CD4-positive, alpha-beta memory T cell (primary cell): ENCODE measurements at regions of chr12 and their contacts with region 1.

Region 1: GRCh38 chr12:47742253-47742825 is 16.3 kb downstream of the RAPGEF3 start:
- DNase-seq: peak; percentile 58 to 67 (median 61)
- H3K4me3 ChIP-seq: no peak overlapping the region
- H3K4me3 Mint-ChIP-seq: peak overlapping the region in 2 of 8 donors; percentile 24 to 59
- H3K27ac ChIP-seq: no peak overlapping the region
- H3K27ac Mint-ChIP-seq: peak overlapping the region in 6 of 7 donors; percentile 20 to 72 (median 36)
- H3K4me1 ChIP-seq: peaks cover 29% of the 10 kb centered on the region
- H3K4me1 Mint-ChIP-seq: peaks cover 19 to 55% (median 40%) of the 10 kb centered on the region in 4 donors
- H3K27me3 ChIP-seq: no peaks in the 10 kb centered on the region
- H3K27me3 Mint-ChIP-seq: peaks cover 0 to 3% of the 10 kb centered on the region in 2 donors

Region 2: DNA sequence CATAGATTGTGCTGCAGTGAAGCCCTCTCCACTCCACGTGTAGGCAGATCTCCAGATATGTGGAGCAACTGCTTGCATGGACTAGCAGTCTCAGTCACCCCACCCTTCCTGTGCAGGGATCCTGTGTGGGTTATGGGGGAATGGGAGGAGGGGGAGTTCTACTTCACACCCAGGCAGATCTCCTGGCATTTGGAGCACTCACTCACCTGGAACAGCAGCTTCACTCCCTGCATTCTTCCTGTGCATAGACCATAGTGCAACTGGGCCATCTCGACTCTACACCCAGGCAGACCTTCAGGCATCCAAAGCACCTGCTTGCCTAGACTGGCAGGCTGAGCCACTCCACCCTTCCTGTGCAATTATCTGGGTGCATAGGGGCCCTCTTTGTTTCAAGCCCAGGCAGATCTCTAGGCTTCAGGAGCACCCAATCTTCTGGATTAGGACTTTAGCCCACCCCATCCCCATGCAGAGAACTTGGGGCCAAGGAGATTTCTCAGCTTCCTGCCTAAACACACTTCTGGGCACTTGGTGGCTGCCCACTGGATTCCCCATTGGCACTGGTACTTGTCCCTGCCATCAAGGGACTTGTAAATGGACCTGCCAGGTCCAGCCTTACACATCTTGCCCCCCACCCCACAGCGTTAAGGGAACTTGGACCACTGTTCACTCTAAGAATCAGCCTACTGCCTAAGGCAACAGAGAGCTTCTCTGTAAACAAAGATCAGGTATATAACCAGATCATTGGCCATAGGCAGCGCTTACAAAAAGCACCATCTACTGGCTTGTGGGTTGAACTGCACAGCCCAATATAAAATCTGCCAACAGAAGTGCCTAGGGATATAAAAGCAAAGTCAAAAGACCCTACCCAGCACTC is 758.7 kb before region 1 on chr12:
- CTCF ChIA-PET with region 1: no interaction called
- POLR2A ChIA-PET with region 1: no interaction called
- intact Hi-C with region 1: no loop called
- DNase-seq: peak; percentile 21 to 37 (median 26)
- H3K4me3 ChIP-seq: no peak overlapping the region
- H3K4me3 Mint-ChIP-seq: peak overlapping the region in 1 of 8 donors; percentile 20
- H3K27ac ChIP-seq: no peak overlapping the region
- H3K27ac Mint-ChIP-seq: no peak overlapping the region
- H3K4me1 ChIP-seq: peaks cover 9% of the 10 kb centered on the region
- H3K4me1 Mint-ChIP-seq: peaks cover 0 to 7% (median 3%) of the 10 kb centered on the region in 4 donors
- H3K27me3 ChIP-seq: peaks cover 4% of the 10 kb centered on the region
- H3K27me3 Mint-ChIP-seq: peaks cover 26 to 34% of the 10 kb centered on the region in 2 donors

Region 3: GRCh38 chr12:47121146-47121545 is 621.2 kb before region 1 on chr12:
- CTCF ChIA-PET with region 1: no interaction called
- POLR2A ChIA-PET with region 1: no interaction called
- intact Hi-C with region 1: no loop called
- DNase-seq: no peak
- H3K4me3 ChIP-seq: no peak overlapping the region
- H3K4me3 Mint-ChIP-seq: no peak overlapping the region
- H3K27ac ChIP-seq: no peak overlapping the region
- H3K27ac Mint-ChIP-seq: no peak overlapping the region
- H3K4me1 ChIP-seq: no peaks in the 10 kb centered on the region
- H3K4me1 Mint-ChIP-seq: peaks cover 0 to 17% (median 13%) of the 10 kb centered on the region in 4 donors
- H3K27me3 ChIP-seq: no peaks in the 10 kb centered on the region
- H3K27me3 Mint-ChIP-seq: no peaks in the 10 kb centered on the region

Region 4: GRCh38 chr12:47433876-47434275 is 308.5 kb before region 1 on chr12:
- CTCF ChIA-PET with region 1: no interaction called
- POLR2A ChIA-PET with region 1: no interaction called
- intact Hi-C with region 1: no loop called
- DNase-seq: no peak
- H3K4me3 ChIP-seq: no peak overlapping the region
- H3K4me3 Mint-ChIP-seq: no peak overlapping the region
- H3K27ac ChIP-seq: no peak overlapping the region
- H3K27ac Mint-ChIP-seq: no peak overlapping the region
- H3K4me1 ChIP-seq: no peaks in the 10 kb centered on the region
- H3K4me1 Mint-ChIP-seq: no peaks in the 10 kb centered on the region
- H3K27me3 ChIP-seq: no peaks in the 10 kb centered on the region
- H3K27me3 Mint-ChIP-seq: no peaks in the 10 kb centered on the region

Region 5: DNA sequence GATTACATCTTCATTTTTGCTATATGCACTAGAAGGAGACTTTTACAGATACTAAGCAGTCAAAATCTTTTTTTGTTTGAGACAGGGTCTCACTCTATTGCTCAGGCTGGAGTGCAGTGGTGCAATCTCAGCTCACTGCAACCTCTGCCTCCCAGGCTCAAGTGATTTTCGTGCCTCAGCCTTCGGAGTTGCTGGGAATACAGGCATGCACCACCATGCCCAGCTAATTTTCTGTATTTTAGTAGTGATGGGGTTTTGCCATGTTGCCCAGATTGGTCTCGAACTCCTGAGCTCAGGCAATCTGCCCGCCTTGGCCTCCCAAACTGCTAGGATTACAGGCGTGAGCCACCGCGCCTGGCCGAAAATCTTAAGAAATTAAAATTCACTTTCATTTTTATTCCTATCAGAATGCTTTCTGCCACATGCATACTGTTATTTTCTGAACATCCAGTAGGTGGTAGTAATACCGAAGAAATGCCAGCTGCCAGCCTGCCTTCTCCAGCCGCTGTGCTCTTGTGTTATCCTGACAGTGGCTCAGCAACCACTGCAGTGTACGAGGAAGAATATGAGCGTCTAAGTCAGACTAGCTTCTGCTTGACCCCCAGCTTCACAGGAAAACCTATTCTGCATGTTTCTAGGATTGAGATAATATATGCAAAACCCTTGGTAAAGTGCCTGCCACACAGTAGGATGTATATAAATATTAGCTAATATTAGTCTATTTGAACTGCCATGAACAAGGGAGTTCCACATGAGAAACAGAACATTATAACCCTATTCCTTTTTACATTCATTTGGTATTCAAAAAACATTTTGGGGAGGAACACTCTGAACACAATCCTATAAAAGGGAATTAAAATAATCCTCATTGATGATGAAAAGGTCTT is 90.7 kb before region 1 on chr12:
- CTCF ChIA-PET with region 1: interaction called, 10 read pairs
- POLR2A ChIA-PET with region 1: no interaction called
- intact Hi-C with region 1: no loop called
- DNase-seq: peak; percentile 55 to 64 (median 60)
- H3K4me3 ChIP-seq: no peak overlapping the region
- H3K4me3 Mint-ChIP-seq: peak overlapping the region; percentile 37 to 77 (median 74)
- H3K27ac ChIP-seq: no peak overlapping the region
- H3K27ac Mint-ChIP-seq: peak overlapping the region in 6 of 7 donors; percentile 38 to 72 (median 70)
- H3K4me1 ChIP-seq: peaks cover 5% of the 10 kb centered on the region
- H3K4me1 Mint-ChIP-seq: peaks cover 5 to 10% (median 8%) of the 10 kb centered on the region in 4 donors
- H3K27me3 ChIP-seq: no peaks in the 10 kb centered on the region
- H3K27me3 Mint-ChIP-seq: no peaks in the 10 kb centered on the region

Region 6: GRCh38 chr12:47725893-47726292 is 16.4 kb before region 1 on chr12:
- CTCF ChIA-PET with region 1: interaction called, 96 read pairs
- POLR2A ChIA-PET with region 1: interaction called, 4 read pairs
- intact Hi-C with region 1: no loop called
- DNase-seq: no peak
- H3K4me3 ChIP-seq: no peak overlapping the region
- H3K4me3 Mint-ChIP-seq: no peak overlapping the region
- H3K27ac ChIP-seq: no peak overlapping the region
- H3K27ac Mint-ChIP-seq: peak overlapping the region in 1 of 7 donors; percentile 8
- H3K4me1 ChIP-seq: no peaks in the 10 kb centered on the region
- H3K4me1 Mint-ChIP-seq: peaks cover 9 to 16% (median 12%) of the 10 kb centered on the region in 4 donors
- H3K27me3 ChIP-seq: no peaks in the 10 kb centered on the region
- H3K27me3 Mint-ChIP-seq: no peaks in the 10 kb centered on the region

Region 7: DNA sequence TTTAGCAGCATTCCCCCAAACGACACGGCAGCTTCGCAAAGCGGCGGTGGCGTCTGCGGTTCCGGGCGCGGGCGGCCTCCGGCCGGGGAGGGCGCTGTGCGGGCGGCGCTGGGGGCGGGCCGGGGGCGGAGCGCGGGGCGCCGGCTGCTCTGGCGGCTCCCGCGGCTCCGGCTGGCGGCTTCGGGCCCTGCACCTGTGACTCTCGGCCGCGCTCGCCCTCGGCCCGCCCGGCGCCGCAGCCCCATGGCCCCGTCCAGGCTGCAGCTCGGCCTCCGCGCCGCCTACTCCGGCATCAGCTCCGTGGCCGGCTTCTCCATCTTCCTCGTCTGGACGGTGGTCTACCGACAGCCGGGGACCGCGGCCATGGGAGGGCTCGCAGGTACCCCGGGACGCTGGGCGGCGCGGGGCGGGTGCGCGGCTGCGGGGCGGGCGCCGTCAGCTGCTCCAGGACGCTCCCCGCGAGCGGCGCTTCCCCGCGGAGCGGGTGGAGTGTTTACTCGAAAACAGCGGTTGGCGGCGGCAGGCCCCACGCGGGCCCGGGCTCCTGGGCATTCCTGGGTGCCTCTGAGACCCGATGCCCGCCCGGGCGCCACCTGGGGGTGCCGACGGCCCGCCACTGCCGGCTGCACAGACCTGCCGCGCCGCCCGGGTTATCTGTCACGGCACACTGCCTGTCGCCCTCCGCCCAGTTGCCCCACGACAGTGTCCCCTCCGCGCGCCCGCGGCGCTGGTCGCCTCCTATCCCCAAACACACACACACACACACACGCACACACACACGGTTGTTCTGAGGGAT is 30.9 kb after region 1 on chr12 and contains the start of gene SLC48A1:
- CTCF ChIA-PET with region 1: interaction called, 671 read pairs
- POLR2A ChIA-PET with region 1: interaction called, 14 read pairs
- intact Hi-C with region 1: no loop called
- DNase-seq: peak; percentile 63 to 83 (median 76)
- H3K4me3 ChIP-seq: peak within 1 kb of the TSS in 1 of 2 donors; percentile 62
- H3K4me3 Mint-ChIP-seq: peak within 1 kb of the TSS; percentile 84 to 94 (median 89)
- H3K27ac ChIP-seq: peak within 1 kb of the TSS; percentile 47
- H3K27ac Mint-ChIP-seq: peak within 1 kb of the TSS; percentile 77 to 91 (median 84)
- H3K4me1 ChIP-seq: peaks cover 16% of the 10 kb centered on the region
- H3K4me1 Mint-ChIP-seq: peaks cover 5 to 23% (median 14%) of the 10 kb centered on the region in 4 donors
- H3K27me3 ChIP-seq: no peaks in the 10 kb centered on the region
- H3K27me3 Mint-ChIP-seq: no peaks in the 10 kb centered on the region
- total RNA-seq, gene SLC48A1: 12.1 to 12.3 TPM

Region 8: GRCh38 chr12:47791874-47792273 is 49.5 kb after region 1 on chr12:
- CTCF ChIA-PET with region 1: interaction called, 23 read pairs
- POLR2A ChIA-PET with region 1: no interaction called
- intact Hi-C with region 1: no loop called
- DNase-seq: no peak
- H3K4me3 ChIP-seq: no peak overlapping the region
- H3K4me3 Mint-ChIP-seq: no peak overlapping the region
- H3K27ac ChIP-seq: no peak overlapping the region
- H3K27ac Mint-ChIP-seq: peak overlapping the region in 2 of 7 donors; percentile 59 to 67
- H3K4me1 ChIP-seq: no peaks in the 10 kb centered on the region
- H3K4me1 Mint-ChIP-seq: peaks cover 0 to 6% (median 3%) of the 10 kb centered on the region in 4 donors
- H3K27me3 ChIP-seq: no peaks in the 10 kb centered on the region
- H3K27me3 Mint-ChIP-seq: no peaks in the 10 kb centered on the region

Region 9: GRCh38 chr12:47819896-47820630 is 77.7 kb after region 1 on chr12 and contains the start of gene HDAC7:
- CTCF ChIA-PET with region 1: interaction called, 61 read pairs
- POLR2A ChIA-PET with region 1: interaction called, 4 read pairs
- intact Hi-C with region 1: no loop called
- DNase-seq: peak; percentile 55 to 86 (median 68)
- H3K4me3 ChIP-seq: peak within 1 kb of the TSS; percentile 79 to 84
- H3K4me3 Mint-ChIP-seq: peak within 1 kb of the TSS; percentile 91 to 97 (median 95)
- H3K27ac ChIP-seq: peak within 1 kb of the TSS; percentile 79
- H3K27ac Mint-ChIP-seq: peak within 1 kb of the TSS; percentile 93 to 98 (median 97)
- H3K4me1 ChIP-seq: peaks cover 87% of the 10 kb centered on the region
- H3K4me1 Mint-ChIP-seq: peaks cover 62 to 87% (median 77%) of the 10 kb centered on the region in 4 donors
- H3K27me3 ChIP-seq: no peaks in the 10 kb centered on the region
- H3K27me3 Mint-ChIP-seq: no peaks in the 10 kb centered on the region
- total RNA-seq, gene HDAC7: 139 to 142 TPM

Region 10: GRCh38 chr12:47949441-47950308 is 207.3 kb after region 1 on chr12:
- CTCF ChIA-PET with region 1: interaction called, 27 read pairs
- POLR2A ChIA-PET with region 1: no interaction called
- intact Hi-C with region 1: loop called (anchors 1 kb)
- DNase-seq: peak in 4 of 5 donors; percentile 28 to 38 (median 34)
- H3K4me3 ChIP-seq: no peak overlapping the region
- H3K4me3 Mint-ChIP-seq: no peak overlapping the region
- H3K27ac ChIP-seq: no peak overlapping the region
- H3K27ac Mint-ChIP-seq: no peak overlapping the region
- H3K4me1 ChIP-seq: no peaks in the 10 kb centered on the region
- H3K4me1 Mint-ChIP-seq: no peaks in the 10 kb centered on the region
- H3K27me3 ChIP-seq: no peaks in the 10 kb centered on the region
- H3K27me3 Mint-ChIP-seq: peaks cover 3 to 6% of the 10 kb centered on the region in 2 donors